ENCODE measurements at regions of chr1 and their contacts with region 1.

Region 1: DNA sequence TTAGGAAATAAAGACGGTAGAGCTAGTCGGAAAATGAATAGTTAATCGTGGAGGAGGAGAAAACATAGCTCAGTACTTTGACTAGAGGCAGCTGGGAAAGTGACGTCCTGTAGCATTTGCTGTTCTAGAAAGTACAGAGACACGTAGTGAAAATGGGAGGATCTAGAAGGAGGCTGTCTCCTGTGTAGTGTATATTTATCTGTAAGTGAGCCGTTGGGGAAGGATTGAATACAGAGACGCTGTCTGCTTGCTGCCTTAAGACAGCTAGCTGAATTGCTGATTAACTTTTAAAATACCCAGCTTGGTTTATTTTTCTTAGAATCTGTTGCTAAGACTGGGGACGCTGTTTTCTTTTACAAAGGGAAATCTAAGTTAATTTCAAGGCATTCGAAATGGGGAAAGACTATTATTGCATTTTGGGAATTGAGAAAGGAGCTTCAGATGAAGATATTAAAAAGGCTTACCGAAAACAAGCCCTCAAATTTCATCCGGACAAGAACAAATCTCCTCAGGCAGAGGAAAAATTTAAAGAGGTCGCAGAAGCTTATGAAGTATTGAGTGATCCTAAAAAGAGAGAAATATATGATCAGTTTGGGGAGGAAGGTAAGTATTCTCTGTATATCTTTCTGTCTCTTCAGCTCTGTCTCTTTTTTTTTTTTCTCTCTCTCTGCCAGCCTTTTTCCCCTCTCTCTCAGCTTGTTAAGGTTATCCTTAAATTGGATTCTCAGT is at the start of gene DNAJB4:
- DNase-seq: peak; percentile 69
- H3K4me3 Mint-ChIP-seq: peak within 1 kb of the TSS; percentile 90
- H3K27ac Mint-ChIP-seq: peak within 1 kb of the TSS; percentile 98
- H3K4me1 Mint-ChIP-seq: peaks cover 54% of the 10 kb centered on the region
- H3K27me3 Mint-ChIP-seq: peaks cover 3% of the 10 kb centered on the region
- total RNA-seq, gene DNAJB4: 10.2 and 10.3 TPM in 2 replicates

Region 2: DNA sequence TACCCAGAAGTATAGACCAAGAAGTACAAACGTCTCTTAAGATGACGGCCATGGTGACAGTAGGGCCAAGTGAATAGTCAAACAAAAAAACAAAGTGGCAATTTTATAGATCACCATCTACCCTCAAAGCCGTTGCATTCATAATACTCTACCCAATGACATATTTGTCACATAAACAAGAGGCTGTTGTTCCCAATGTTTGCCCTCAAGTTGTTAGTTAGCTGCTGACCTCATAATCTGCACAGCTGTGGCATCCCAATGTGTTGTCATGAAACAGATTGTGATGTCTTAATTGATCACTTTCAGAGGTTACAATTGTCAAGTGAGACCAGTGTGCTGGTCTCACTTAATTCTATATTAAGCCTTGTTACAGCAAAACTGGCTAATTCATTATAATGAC is 1596.6 kb before region 1 on chr1:
- intact Hi-C with region 1: no loop called
- DNase-seq: no peak
- H3K4me3 Mint-ChIP-seq: no peak overlapping the region
- H3K27ac Mint-ChIP-seq: no peak overlapping the region
- H3K4me1 Mint-ChIP-seq: no peaks in the 10 kb centered on the region
- H3K27me3 Mint-ChIP-seq: no peaks in the 10 kb centered on the region

Region 3: DNA sequence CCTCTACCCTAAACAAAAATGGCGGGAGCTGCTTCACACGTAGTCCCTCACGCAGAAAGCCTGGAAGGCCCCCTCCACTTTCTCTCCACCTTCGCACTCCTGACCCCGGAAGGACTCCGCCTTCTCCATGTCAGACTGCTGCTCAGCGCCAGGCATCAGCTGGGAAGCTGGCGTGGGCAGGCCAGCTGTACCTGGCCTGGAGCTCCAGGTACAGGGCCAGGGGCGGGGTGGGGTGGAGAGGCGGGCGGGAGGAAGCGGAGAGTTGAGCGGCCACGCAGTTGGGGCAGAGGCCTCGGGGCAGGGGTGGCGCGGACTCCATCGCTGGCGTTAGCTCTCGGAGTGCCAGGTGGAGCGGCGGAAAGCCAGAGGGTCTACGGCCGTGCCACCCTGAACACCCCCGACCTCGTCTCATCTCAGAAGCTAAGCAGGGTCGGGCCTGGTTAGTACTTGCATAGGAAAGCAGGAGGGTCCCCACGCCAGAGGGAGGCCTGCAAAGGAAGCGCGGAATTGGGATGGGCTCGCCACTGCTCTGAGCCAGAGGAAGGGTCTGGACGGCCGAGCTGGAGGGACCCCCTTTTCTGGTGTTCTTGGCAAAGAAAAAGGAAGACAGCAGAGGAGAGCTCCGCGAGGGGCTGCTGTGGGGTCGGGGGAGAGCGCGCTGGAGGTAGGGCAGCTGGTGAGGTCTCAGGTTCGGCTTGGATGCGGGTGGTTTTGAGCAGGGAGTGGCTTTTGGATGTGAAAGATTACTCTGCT is 225.2 kb before region 1 on chr1 and contains the start of gene MIGA1:
- intact Hi-C with region 1: loop called (anchors 1 kb)
- DNase-seq: peak; percentile 77
- H3K4me3 Mint-ChIP-seq: peak within 1 kb of the TSS; percentile 98
- H3K27ac Mint-ChIP-seq: peak within 1 kb of the TSS; percentile 87
- H3K4me1 Mint-ChIP-seq: peaks cover 39% of the 10 kb centered on the region
- H3K27me3 Mint-ChIP-seq: peaks cover 4% of the 10 kb centered on the region
- total RNA-seq, gene MIGA1: 8.0 and 8.6 TPM in 2 replicates

Region 4: GRCh38 chr1:78040484-78041089 is 35.7 kb after region 1 on chr1:
- intact Hi-C with region 1: loop called (anchors 2 kb)
- DNase-seq: no peak
- H3K4me3 Mint-ChIP-seq: no peak overlapping the region
- H3K27ac Mint-ChIP-seq: no peak overlapping the region
- H3K4me1 Mint-ChIP-seq: peaks cover 21% of the 10 kb centered on the region
- H3K27me3 Mint-ChIP-seq: peaks cover 25% of the 10 kb centered on the region

Region 5: GRCh38 chr1:78114034-78114956 is 109.4 kb after region 1 on chr1:
- intact Hi-C with region 1: loop called (anchors 1 kb)
- DNase-seq: peak; percentile 45
- H3K4me3 Mint-ChIP-seq: no peak overlapping the region
- H3K27ac Mint-ChIP-seq: no peak overlapping the region
- H3K4me1 Mint-ChIP-seq: no peaks in the 10 kb centered on the region
- H3K27me3 Mint-ChIP-seq: no peaks in the 10 kb centered on the region

Region 6: GRCh38 chr1:78649628-78650027 is 644.7 kb after region 1 on chr1 and contains the start of gene IFI44:
- intact Hi-C with region 1: loop called (anchors 5 kb)
- DNase-seq: peak; percentile 50
- H3K4me3 Mint-ChIP-seq: peak within 1 kb of the TSS; percentile 88
- H3K27ac Mint-ChIP-seq: peak within 1 kb of the TSS; percentile 91
- H3K4me1 Mint-ChIP-seq: peaks cover 58% of the 10 kb centered on the region
- H3K27me3 Mint-ChIP-seq: no peaks in the 10 kb centered on the region
- total RNA-seq, gene IFI44: 26.9 and 28.1 TPM in 2 replicates

Measured in activated T-helper 1 cell treated with anti-CD3 and anti-CD28 coated beads, Interleukin-12 subunit alpha, Interleukin-12 subunit beta, Interleukin-2, Interleukin-4 antibody, amounts not matched to agents 30 ng/mL and 10 ng/mL and 1 ng/mL, durations not matched to agents 14 hours and 24 hours and 36 hours (primary cell).